B cell (primary cell): ENCODE measurements at regions of chr3 and their contacts with region 1.

Region 1: GRCh38 chr3:119240591-119241434 is at the start of gene B4GALT4:
- DNase-seq: peak; percentile 83
- ATAC-seq: peak; percentile 90
- H3K4me3 ChIP-seq: peak within 1 kb of the TSS; percentile 57 to 82 (median 72)
- H3K4me3 Mint-ChIP-seq: peak within 1 kb of the TSS; percentile 86
- H3K27ac ChIP-seq: peak within 1 kb of the TSS; percentile 62 to 93
- H3K27ac Mint-ChIP-seq: peak within 1 kb of the TSS; percentile 81
- H3K4me1 ChIP-seq: peaks cover 30 to 34% of the 10 kb centered on the region in 2 donors
- H3K4me1 Mint-ChIP-seq: peaks cover 30% of the 10 kb centered on the region
- H3K27me3 ChIP-seq: no peaks in the 10 kb centered on the region
- H3K27me3 Mint-ChIP-seq: no peaks in the 10 kb centered on the region
- CTCF ChIP-seq: no peak
- total RNA-seq, gene B4GALT4: 19.3 and 21.9 TPM in 2 replicates

Region 2: DNA sequence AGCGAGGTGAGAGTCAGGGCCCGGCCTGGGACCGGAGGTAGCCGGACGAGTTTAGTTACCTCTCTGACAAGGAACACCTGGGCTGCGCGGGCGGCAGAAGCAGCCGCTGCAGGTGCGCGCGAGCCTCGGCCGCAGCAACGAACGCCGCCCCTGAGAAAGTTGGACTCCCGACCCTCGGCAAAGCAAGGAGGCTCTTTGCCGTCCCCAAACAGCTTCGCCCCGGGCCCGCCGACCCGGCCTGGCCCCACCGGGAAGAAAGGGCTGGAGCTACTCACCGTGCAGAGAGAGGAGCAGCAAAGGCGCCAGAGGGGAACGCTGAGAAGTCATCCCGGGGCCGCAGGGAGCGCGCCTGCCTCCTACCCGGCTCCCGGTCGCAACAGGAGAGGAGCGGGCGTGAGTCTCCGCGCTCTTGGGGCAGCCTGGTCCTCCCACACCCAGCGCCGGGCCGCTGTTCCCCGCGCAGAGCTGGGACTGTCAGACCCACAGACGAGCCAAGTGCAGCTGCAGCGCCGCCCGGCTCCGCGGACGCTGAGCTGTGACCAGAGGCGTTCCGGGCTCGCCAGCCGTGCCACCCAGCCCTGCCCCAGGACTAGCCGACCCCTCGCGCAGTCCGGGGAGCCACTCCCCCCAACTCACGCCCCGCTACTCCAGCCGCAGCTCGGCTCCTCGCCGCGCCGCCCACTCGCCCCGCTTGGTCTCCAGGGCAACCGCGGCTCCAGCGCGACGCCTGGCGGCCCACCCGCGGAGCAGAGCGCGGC is 206.4 kb before region 1 on chr3 and contains the start of gene IGSF11:
- CTCF ChIA-PET with region 1: interaction called, 6 read pairs
- POLR2A ChIA-PET with region 1: no interaction called
- intact Hi-C with region 1: loop called (anchors 10 kb)
- DNase-seq: peak; percentile 60
- ATAC-seq: peak; percentile 82
- H3K4me3 ChIP-seq: peak within 1 kb of the TSS in 4 of 5 experiments; percentile 37 to 54 (median 48)
- H3K4me3 Mint-ChIP-seq: peak within 1 kb of the TSS; percentile 82
- H3K27ac ChIP-seq: no peak within 1 kb of the TSS
- H3K27ac Mint-ChIP-seq: no peak within 1 kb of the TSS
- H3K4me1 ChIP-seq: peaks cover 4 to 6% of the 10 kb centered on the region in 2 donors
- H3K4me1 Mint-ChIP-seq: peaks cover 11% of the 10 kb centered on the region
- H3K27me3 ChIP-seq: peaks cover 0 to 34% (median 18%) of the 10 kb centered on the region in 4 experiments
- H3K27me3 Mint-ChIP-seq: peaks cover 50% of the 10 kb centered on the region
- CTCF ChIP-seq: peak; percentile 47
- total RNA-seq, gene IGSF11: not detected in 2 replicates

Region 3: GRCh38 chr3:119257682-119258410 is 17.0 kb after region 1 on chr3:
- CTCF ChIA-PET with region 1: interaction called, 10 read pairs
- POLR2A ChIA-PET with region 1: interaction called, 3 read pairs
- intact Hi-C with region 1: no loop called
- DNase-seq: peak; percentile 18
- ATAC-seq: no peak
- H3K4me3 ChIP-seq: no peak overlapping the region
- H3K4me3 Mint-ChIP-seq: no peak overlapping the region
- H3K27ac ChIP-seq: peak overlapping the region in 1 of 2 donors; percentile 34
- H3K27ac Mint-ChIP-seq: no peak overlapping the region
- H3K4me1 ChIP-seq: peaks cover 17 to 21% of the 10 kb centered on the region in 2 donors
- H3K4me1 Mint-ChIP-seq: peaks cover 21% of the 10 kb centered on the region
- H3K27me3 ChIP-seq: peaks cover 0 to 3% (median 0%) of the 10 kb centered on the region in 4 experiments
- H3K27me3 Mint-ChIP-seq: peaks cover 11% of the 10 kb centered on the region
- CTCF ChIP-seq: no peak

Region 4: GRCh38 chr3:119322835-119323722 is 82.3 kb after region 1 on chr3:
- CTCF ChIA-PET with region 1: interaction called, 10 read pairs
- POLR2A ChIA-PET with region 1: no interaction called
- intact Hi-C with region 1: loop called (anchors 1 kb)
- DNase-seq: peak; percentile 97
- ATAC-seq: peak; percentile 86
- H3K4me3 ChIP-seq: peak overlapping the region; percentile 44 to 86 (median 61)
- H3K4me3 Mint-ChIP-seq: peak overlapping the region; percentile 88
- H3K27ac ChIP-seq: peak overlapping the region; percentile 86 to 87
- H3K27ac Mint-ChIP-seq: peak overlapping the region; percentile 93
- H3K4me1 ChIP-seq: peaks cover 13 to 22% of the 10 kb centered on the region in 2 donors
- H3K4me1 Mint-ChIP-seq: peaks cover 48% of the 10 kb centered on the region
- H3K27me3 ChIP-seq: no peaks in the 10 kb centered on the region
- H3K27me3 Mint-ChIP-seq: no peaks in the 10 kb centered on the region
- CTCF ChIP-seq: no peak

Region 5: GRCh38 chr3:119395923-119396358 is 155.1 kb after region 1 on chr3:
- CTCF ChIA-PET with region 1: no interaction called
- POLR2A ChIA-PET with region 1: no interaction called
- intact Hi-C with region 1: no loop called
- DNase-seq: no peak
- ATAC-seq: no peak
- H3K4me3 ChIP-seq: no peak overlapping the region
- H3K4me3 Mint-ChIP-seq: no peak overlapping the region
- H3K27ac ChIP-seq: no peak overlapping the region
- H3K27ac Mint-ChIP-seq: no peak overlapping the region
- H3K4me1 ChIP-seq: peaks cover 0 to 2% of the 10 kb centered on the region in 2 donors
- H3K4me1 Mint-ChIP-seq: peaks cover 2% of the 10 kb centered on the region
- H3K27me3 ChIP-seq: no peaks in the 10 kb centered on the region
- H3K27me3 Mint-ChIP-seq: no peaks in the 10 kb centered on the region
- CTCF ChIP-seq: no peak

Region 6: GRCh38 chr3:119463171-119464169 is 222.7 kb after region 1 on chr3 and contains the start of gene TMEM39A:
- CTCF ChIA-PET with region 1: no interaction called
- POLR2A ChIA-PET with region 1: interaction called, 3 read pairs
- intact Hi-C with region 1: loop called (anchors 10 kb)
- DNase-seq: peak; percentile 99
- ATAC-seq: peak; percentile 87
- H3K4me3 ChIP-seq: peak within 1 kb of the TSS; percentile 76 to 99 (median 85)
- H3K4me3 Mint-ChIP-seq: peak within 1 kb of the TSS; percentile 96
- H3K27ac ChIP-seq: peak within 1 kb of the TSS; percentile 68 to 88
- H3K27ac Mint-ChIP-seq: peak within 1 kb of the TSS; percentile 99
- H3K4me1 ChIP-seq: peaks cover 24 to 25% of the 10 kb centered on the region in 2 donors
- H3K4me1 Mint-ChIP-seq: peaks cover 37% of the 10 kb centered on the region
- H3K27me3 ChIP-seq: no peaks in the 10 kb centered on the region
- H3K27me3 Mint-ChIP-seq: no peaks in the 10 kb centered on the region
- CTCF ChIP-seq: no peak
- total RNA-seq, gene TMEM39A: 39.9 and 50.3 TPM in 2 replicates

Region 7: GRCh38 chr3:119702530-119703157 is 461.8 kb after region 1 on chr3 and contains the start of gene CFAP91:
- CTCF ChIA-PET with region 1: no interaction called
- POLR2A ChIA-PET with region 1: no interaction called
- intact Hi-C with region 1: loop called (anchors 10 kb)
- DNase-seq: peak; percentile 93
- ATAC-seq: peak; percentile 95
- H3K4me3 ChIP-seq: peak within 1 kb of the TSS in 4 of 5 experiments; percentile 47 to 67 (median 62)
- H3K4me3 Mint-ChIP-seq: peak within 1 kb of the TSS; percentile 88
- H3K27ac ChIP-seq: peak within 1 kb of the TSS in 1 of 2 donors; percentile 37
- H3K27ac Mint-ChIP-seq: peak within 1 kb of the TSS; percentile 82
- H3K4me1 ChIP-seq: peaks cover 25 to 32% of the 10 kb centered on the region in 2 donors
- H3K4me1 Mint-ChIP-seq: peaks cover 39% of the 10 kb centered on the region
- H3K27me3 ChIP-seq: no peaks in the 10 kb centered on the region
- H3K27me3 Mint-ChIP-seq: no peaks in the 10 kb centered on the region
- CTCF ChIP-seq: no peak
- total RNA-seq, gene CFAP91: 6.4 and 7.2 TPM in 2 replicates